CD8-positive, alpha-beta T cell (primary cell): ENCODE measurements at regions of chr17 and their contacts with region 1.

Region 1: DNA sequence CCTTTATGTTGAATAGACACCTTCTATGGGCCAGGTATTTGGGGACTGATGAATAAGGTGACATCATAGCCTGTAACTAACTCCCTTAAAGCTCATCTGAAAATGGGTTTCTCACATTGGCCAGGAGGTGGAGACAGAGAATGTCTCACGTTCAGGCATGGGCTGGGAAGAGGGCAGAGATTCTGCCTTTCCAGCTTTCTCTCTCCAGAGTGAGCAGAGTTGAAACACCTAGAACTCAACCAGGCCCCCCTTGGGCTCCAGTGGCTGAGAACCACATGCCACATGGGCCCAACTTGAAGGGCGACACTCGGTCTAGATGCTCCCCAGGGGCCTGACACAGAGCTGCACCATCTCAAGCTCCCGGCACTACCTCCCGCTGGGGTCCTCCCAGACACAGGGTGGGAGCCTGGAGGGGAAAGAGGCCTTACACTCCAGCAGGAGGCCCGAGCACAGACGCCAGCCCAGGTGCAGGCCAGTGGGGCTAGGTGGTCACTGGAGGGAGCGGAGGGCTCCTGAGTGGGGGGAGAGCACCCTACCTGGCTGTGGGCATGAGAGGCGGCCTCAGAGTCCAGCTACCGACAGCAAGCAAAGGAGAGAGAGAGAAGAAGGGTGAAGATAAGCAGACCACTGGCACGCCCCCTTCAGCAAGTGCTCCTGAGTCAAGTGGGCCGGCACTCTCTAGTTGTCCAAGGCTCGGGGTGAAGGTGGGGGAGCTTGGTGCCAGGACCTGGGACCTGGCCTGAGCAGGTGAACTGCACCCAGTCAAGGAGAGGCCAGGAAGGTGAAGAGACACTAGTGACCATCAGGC is 55.9 kb downstream of the MYO18A start:
- DNase-seq: peak in 8 of 9 experiments; percentile 12 to 76 (median 44)
- ATAC-seq: peak; percentile 97
- H3K4me3 ChIP-seq: no peak overlapping the region
- H3K4me3 Mint-ChIP-seq: no peak overlapping the region
- H3K27ac ChIP-seq: no peak overlapping the region
- H3K27ac Mint-ChIP-seq: no peak overlapping the region
- H3K4me1 ChIP-seq: no peaks in the 10 kb centered on the region
- H3K4me1 Mint-ChIP-seq: peaks cover 5% of the 10 kb centered on the region
- H3K27me3 ChIP-seq: no peaks in the 10 kb centered on the region
- H3K27me3 Mint-ChIP-seq: no peaks in the 10 kb centered on the region
- CTCF ChIP-seq: peak; percentile 67

Region 2: DNA sequence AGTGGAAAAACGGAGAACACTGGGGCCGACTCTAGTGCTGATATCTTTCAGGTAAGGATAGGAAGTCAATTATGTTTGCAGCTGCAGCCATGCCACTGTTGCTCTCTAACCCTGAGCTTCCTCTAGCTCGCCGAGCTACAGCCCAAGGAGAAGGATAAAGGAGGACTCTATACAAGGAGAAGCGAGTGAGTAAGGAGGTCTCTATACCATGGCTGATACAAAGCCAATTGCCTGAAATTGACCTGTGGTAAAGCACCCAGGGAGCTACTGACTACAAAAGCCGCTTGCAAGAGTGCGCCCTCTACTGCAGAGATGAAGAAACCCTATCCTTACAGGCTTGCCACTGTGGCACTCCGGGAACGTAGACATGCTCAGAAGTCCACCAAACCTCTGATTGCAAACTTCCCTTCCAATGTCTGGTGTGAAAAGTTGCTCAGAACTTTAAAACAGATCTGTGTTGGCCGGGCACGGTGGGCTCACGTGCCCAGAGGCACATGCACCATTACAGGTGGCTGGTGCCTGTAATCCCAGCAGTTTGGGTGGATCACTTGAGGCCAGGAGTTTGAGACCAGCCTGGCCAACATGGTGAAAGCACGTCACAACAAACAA is 707.5 kb before region 1 on chr17:
- CTCF ChIA-PET with region 1: no interaction called
- POLR2A ChIA-PET with region 1: no interaction called
- intact Hi-C with region 1: no loop called
- DNase-seq: peak; percentile 24 to 71 (median 51)
- ATAC-seq: peak; percentile 73
- H3K4me3 ChIP-seq: no peak overlapping the region
- H3K4me3 Mint-ChIP-seq: no peak overlapping the region
- H3K27ac ChIP-seq: no peak overlapping the region
- H3K27ac Mint-ChIP-seq: no peak overlapping the region
- H3K4me1 ChIP-seq: no peaks in the 10 kb centered on the region
- H3K4me1 Mint-ChIP-seq: no peaks in the 10 kb centered on the region
- H3K27me3 ChIP-seq: no peaks in the 10 kb centered on the region
- H3K27me3 Mint-ChIP-seq: peaks cover 5% of the 10 kb centered on the region
- CTCF ChIP-seq: peak; percentile 72

Region 3: DNA sequence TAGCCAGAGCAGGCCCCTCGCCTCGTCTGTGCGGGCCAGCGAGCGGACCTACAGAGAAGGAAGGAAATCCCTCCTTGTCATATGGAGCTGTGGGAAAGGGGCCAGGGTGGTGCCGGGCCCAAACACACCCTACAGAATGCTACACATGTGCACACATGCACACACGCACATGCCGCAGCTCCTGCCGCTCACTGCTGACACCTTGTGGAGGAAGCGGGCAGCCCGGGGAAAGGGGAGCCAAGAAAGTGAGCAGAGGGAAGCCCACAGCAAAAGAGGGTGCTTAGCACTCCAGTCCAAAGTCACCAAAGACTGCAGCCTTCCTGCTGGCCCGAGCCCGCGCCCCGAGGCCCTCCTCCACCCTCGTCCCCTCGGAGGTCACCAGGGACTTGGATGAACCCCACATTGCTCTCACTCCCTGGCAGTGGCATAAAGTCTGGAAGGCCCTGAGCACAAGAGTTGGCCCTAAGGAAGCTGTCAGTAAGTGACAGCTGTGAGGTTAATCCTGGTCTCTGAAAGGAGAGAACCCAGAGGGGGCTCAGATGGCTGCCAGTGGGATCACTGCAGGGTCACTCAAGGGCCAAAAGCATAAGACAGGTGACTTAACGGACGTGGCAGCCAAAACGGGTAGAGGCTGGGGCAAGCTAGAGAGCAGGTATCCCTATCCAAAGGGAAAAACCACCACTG is 12.4 kb before region 1 on chr17:
- CTCF ChIA-PET with region 1: interaction called, 80 read pairs
- POLR2A ChIA-PET with region 1: no interaction called
- intact Hi-C with region 1: no loop called
- DNase-seq: peak; percentile 49 to 79 (median 64)
- ATAC-seq: peak; percentile 88
- H3K4me3 ChIP-seq: no peak overlapping the region
- H3K4me3 Mint-ChIP-seq: no peak overlapping the region
- H3K27ac ChIP-seq: no peak overlapping the region
- H3K27ac Mint-ChIP-seq: no peak overlapping the region
- H3K4me1 ChIP-seq: peaks cover 3% of the 10 kb centered on the region
- H3K4me1 Mint-ChIP-seq: no peaks in the 10 kb centered on the region
- H3K27me3 ChIP-seq: no peaks in the 10 kb centered on the region
- H3K27me3 Mint-ChIP-seq: no peaks in the 10 kb centered on the region
- CTCF ChIP-seq: peak; percentile 57

Region 4: DNA sequence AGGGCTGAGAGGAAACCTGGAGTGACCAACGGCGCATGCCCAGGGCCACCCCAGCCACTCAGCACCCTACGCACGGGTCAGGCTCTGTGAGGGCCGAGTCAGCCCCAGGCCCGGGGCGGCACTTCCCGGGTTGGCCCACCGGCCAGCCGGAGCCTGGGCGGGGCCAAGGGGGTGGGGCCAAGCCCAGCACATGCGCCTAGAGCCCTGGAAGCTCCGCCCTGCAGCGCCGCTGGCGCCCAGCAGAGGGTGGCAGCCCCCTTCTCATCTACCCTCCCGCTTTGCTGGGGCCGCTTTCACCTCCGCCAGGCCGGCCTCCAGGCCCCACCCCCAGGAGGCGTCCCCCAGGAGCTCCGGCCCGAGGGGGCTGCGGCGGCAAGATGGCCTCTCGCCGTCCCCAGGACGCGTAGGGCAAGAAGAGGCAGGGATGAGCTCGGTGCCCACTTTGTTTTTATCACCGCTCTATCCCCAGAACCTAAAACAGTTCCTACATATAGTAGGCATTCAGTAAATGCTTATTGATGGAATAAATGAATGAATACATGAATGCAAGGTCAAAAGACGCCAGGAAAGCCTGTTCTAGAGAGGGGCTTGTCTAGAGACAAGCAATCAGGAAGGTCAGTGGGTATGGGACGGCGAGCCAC is 24.6 kb after region 1 on chr17:
- CTCF ChIA-PET with region 1: interaction called, 73 read pairs
- POLR2A ChIA-PET with region 1: interaction called, 7 read pairs
- intact Hi-C with region 1: loop called (anchors 1 kb)
- DNase-seq: peak; percentile 82 to 95 (median 91)
- ATAC-seq: peak; percentile 97
- H3K4me3 ChIP-seq: peak overlapping the region; percentile 54 to 56
- H3K4me3 Mint-ChIP-seq: peak overlapping the region; percentile 76
- H3K27ac ChIP-seq: peak overlapping the region in 1 of 2 experiments; percentile 88
- H3K27ac Mint-ChIP-seq: peak overlapping the region; percentile 87
- H3K4me1 ChIP-seq: peaks cover 23% of the 10 kb centered on the region
- H3K4me1 Mint-ChIP-seq: peaks cover 33% of the 10 kb centered on the region
- H3K27me3 ChIP-seq: no peaks in the 10 kb centered on the region
- H3K27me3 Mint-ChIP-seq: no peaks in the 10 kb centered on the region
- CTCF ChIP-seq: peak; percentile 98

Region 5: DNA sequence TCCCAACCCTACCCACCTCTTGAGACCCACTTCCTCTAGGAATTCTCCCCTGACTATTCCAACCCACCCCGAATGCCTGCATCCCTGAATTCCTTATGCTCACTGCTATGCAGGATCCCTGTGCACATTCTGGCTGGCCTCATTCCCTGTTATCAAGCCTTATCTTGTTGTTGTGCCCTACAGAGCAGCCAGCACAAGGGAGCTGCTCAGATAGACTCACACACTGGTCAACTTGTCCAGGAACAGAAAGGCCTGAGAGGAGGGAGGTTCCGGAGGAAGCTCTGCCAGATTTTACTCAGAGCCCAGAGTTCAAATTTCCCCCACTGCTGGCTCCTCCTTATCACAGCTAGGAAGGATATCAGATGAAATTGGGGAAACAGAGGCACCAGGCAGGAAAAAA is 80.7 kb after region 1 on chr17:
- CTCF ChIA-PET with region 1: interaction called, 10 read pairs
- POLR2A ChIA-PET with region 1: no interaction called
- intact Hi-C with region 1: no loop called
- DNase-seq: no peak
- ATAC-seq: no peak
- H3K4me3 ChIP-seq: no peak overlapping the region
- H3K4me3 Mint-ChIP-seq: no peak overlapping the region
- H3K27ac ChIP-seq: no peak overlapping the region
- H3K27ac Mint-ChIP-seq: no peak overlapping the region
- H3K4me1 ChIP-seq: no peaks in the 10 kb centered on the region
- H3K4me1 Mint-ChIP-seq: no peaks in the 10 kb centered on the region
- H3K27me3 ChIP-seq: no peaks in the 10 kb centered on the region
- H3K27me3 Mint-ChIP-seq: peaks cover 4% of the 10 kb centered on the region
- CTCF ChIP-seq: no peak

Region 6: DNA sequence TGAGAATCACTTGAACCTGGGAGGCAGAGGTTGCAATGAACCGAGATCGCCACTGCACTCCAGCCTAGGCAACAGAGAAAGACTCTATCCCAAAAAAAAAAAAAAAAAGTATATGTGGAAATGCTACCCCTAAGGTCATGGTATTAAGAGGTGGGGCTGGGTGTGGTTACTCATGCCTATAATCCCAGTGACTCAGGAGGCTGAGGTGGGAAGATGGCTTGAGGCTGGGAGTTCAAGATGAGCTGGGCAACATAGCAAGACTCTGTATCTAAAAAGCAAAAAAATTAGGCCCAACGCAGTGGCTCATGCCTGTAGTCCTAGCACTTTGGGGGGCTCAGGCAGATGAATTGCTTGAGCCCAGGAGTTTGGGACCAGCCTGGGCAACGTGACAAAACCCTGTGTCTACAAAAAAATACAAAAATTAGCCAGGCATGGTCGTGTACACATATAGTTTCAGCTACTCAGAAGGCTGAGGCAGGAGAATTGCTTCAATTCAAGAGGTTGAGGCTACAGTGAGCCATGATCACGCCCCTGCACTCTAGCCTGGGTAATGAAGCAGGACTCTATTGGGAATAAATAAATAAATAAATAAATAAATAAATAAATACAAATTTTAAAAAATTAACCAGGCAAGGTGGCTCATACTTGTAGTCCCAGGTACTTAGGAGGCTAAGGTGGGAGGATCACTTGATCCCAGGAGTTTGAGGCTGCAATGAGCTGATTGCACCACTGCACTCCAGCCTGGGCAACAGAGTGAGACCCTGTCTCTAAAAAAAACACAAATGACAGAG is 201.9 kb after region 1 on chr17:
- CTCF ChIA-PET with region 1: no interaction called
- POLR2A ChIA-PET with region 1: no interaction called
- intact Hi-C with region 1: no loop called
- DNase-seq: no peak
- ATAC-seq: no peak
- H3K4me3 ChIP-seq: no peak overlapping the region
- H3K4me3 Mint-ChIP-seq: no peak overlapping the region
- H3K27ac ChIP-seq: no peak overlapping the region
- H3K27ac Mint-ChIP-seq: no peak overlapping the region
- H3K4me1 ChIP-seq: no peaks in the 10 kb centered on the region
- H3K4me1 Mint-ChIP-seq: no peaks in the 10 kb centered on the region
- H3K27me3 ChIP-seq: no peaks in the 10 kb centered on the region
- H3K27me3 Mint-ChIP-seq: no peaks in the 10 kb centered on the region
- CTCF ChIP-seq: no peak